Activated T-helper 2 cell treated with anti-CD3 and anti-CD28 coated beads, Interferon-gamma antibody, Interleukin-2, Interleukin-4, amounts not matched to agents 10 μg/mL and 5 μg/mL and 100 μg/mL, durations not matched to agents 14 hours and 24 hours and 36 hours (primary cell): ENCODE measurements at regions of chr4 and their contacts with region 1.

Region 1: DNA sequence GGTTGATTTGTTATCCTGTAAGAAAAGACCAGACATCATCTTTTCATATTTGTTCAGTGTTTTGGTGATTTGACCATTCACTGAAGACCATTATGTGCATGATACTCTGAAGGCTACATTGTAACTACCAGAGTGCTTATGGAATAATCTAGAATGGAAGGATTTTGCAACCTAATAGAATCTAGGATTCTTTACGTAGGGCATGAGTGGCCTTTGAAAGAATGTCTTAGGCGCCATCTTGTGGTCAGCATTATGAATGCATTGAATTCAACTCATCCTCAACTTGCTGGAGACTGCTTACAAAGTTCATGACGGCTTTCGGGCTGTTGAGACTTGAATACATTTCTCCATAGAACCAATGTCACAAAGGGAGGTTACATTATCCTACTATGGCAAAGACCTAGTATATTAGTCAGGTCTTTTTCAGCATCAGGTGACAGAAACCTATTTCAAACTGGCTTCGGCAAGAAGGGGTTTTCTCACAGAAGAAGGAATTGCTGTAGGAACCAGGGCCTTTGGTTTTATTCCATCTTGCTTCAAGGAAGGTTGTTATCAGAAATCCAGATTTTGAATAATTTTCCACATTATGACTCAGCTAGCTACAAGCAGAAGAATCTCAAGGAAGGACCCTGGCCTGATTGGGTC is 104.1 kb downstream of the GPAT3 start:
- DNase-seq: peak; percentile 20
- H3K4me3 Mint-ChIP-seq: no peak overlapping the region
- H3K27ac Mint-ChIP-seq: no peak overlapping the region
- H3K4me1 Mint-ChIP-seq: peaks cover 5% of the 10 kb centered on the region
- H3K27me3 Mint-ChIP-seq: peaks cover 21% of the 10 kb centered on the region

Region 2: GRCh38 chr4:82965763-82966162 is 674.2 kb before region 1 on chr4:
- intact Hi-C with region 1: no loop called
- DNase-seq: no peak
- H3K4me3 Mint-ChIP-seq: no peak overlapping the region
- H3K27ac Mint-ChIP-seq: no peak overlapping the region
- H3K4me1 Mint-ChIP-seq: peaks cover 3% of the 10 kb centered on the region
- H3K27me3 Mint-ChIP-seq: no peaks in the 10 kb centered on the region

Region 3: GRCh38 chr4:83490876-83491450 is 149.0 kb before region 1 on chr4:
- intact Hi-C with region 1: loop called (anchors 1 kb)
- DNase-seq: no peak
- H3K4me3 Mint-ChIP-seq: no peak overlapping the region
- H3K27ac Mint-ChIP-seq: no peak overlapping the region
- H3K4me1 Mint-ChIP-seq: peaks cover 2% of the 10 kb centered on the region
- H3K27me3 Mint-ChIP-seq: no peaks in the 10 kb centered on the region

Region 4: GRCh38 chr4:83503974-83504373 is 136.0 kb before region 1 on chr4:
- intact Hi-C with region 1: loop called (anchors 1 kb)
- DNase-seq: no peak
- H3K4me3 Mint-ChIP-seq: no peak overlapping the region
- H3K27ac Mint-ChIP-seq: no peak overlapping the region
- H3K4me1 Mint-ChIP-seq: peaks cover 7% of the 10 kb centered on the region
- H3K27me3 Mint-ChIP-seq: no peaks in the 10 kb centered on the region

Region 5: GRCh38 chr4:83691998-83692397 is 52.0 kb after region 1 on chr4:
- intact Hi-C with region 1: no loop called
- DNase-seq: no peak
- H3K4me3 Mint-ChIP-seq: no peak overlapping the region
- H3K27ac Mint-ChIP-seq: no peak overlapping the region
- H3K4me1 Mint-ChIP-seq: no peaks in the 10 kb centered on the region
- H3K27me3 Mint-ChIP-seq: peaks cover under 1% of the 10 kb centered on the region

Region 6: DNA sequence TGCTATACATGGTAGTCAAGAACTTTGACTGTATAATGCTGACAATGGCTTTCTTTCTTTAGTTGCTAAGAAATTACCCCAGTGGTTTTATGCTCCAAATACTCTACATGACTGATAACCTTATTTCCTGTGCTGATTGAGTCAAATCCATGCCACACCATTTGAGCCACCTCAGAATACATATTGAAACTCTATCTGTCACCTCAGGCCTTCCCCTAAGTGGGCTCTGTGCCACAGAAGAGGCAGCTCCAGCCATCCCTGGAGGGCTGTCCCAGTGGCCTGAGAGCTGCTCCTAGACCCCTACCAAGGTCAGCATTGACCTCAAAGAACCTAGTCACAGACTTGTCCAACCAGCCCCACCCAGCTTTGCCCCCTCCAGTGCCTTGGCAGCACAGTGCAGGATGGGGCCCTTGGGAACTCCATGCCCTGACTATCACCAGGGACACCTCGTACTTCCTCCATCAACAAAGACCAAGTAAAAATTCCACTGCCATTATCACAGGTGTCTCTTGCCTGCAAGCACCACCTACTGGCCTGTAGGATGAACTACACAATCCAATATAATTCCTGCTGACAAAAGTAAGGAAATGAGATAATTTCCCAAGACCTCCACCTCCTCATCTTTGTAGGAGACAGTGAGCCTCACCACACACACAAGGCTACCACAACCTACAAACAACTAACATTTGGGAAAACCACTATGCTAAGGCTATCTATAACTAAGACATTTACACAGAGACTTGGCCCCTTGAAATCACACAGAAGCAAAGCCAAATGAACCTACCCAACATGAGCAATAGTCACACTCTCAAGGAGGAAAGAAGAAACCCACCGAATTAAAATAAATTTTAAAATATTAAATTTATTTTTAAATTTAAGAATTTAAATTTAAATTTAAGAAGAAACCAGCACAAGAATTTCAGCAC is 619.2 kb after region 1 on chr4:
- intact Hi-C with region 1: loop called (anchors 2 kb)
- DNase-seq: no peak
- H3K4me3 Mint-ChIP-seq: no peak overlapping the region
- H3K27ac Mint-ChIP-seq: no peak overlapping the region
- H3K4me1 Mint-ChIP-seq: no peaks in the 10 kb centered on the region
- H3K27me3 Mint-ChIP-seq: no peaks in the 10 kb centered on the region

Region 7: GRCh38 chr4:84503495-84504437 is 863.8 kb after region 1 on chr4:
- intact Hi-C with region 1: loop called (anchors 2 kb)
- DNase-seq: no peak
- H3K4me3 Mint-ChIP-seq: no peak overlapping the region
- H3K27ac Mint-ChIP-seq: no peak overlapping the region
- H3K4me1 Mint-ChIP-seq: peaks cover 3% of the 10 kb centered on the region
- H3K27me3 Mint-ChIP-seq: peaks cover 75% of the 10 kb centered on the region